ENCODE measurements at regions of chr12 and their contacts with region 1.

Region 1: GRCh38 chr12:121128970-121129810 is 3.5 kb upstream of the P2RX7 start:
- DNase-seq: peak; percentile 91
- H3K4me3 Mint-ChIP-seq: peak overlapping the region; percentile 54
- H3K27ac Mint-ChIP-seq: peak overlapping the region; percentile 98
- H3K4me1 Mint-ChIP-seq: peaks cover 73% of the 10 kb centered on the region
- H3K27me3 Mint-ChIP-seq: no peaks in the 10 kb centered on the region

Region 2: GRCh38 chr12:121033625-121034349 is 95.4 kb before region 1 on chr12:
- CTCF ChIA-PET with region 1: no interaction called
- POLR2A ChIA-PET with region 1: no interaction called
- intact Hi-C with region 1: loop called (anchors 1 kb)
- DNase-seq: peak; percentile 80
- H3K4me3 Mint-ChIP-seq: peak overlapping the region; percentile 10
- H3K27ac Mint-ChIP-seq: peak overlapping the region; percentile 72
- H3K4me1 Mint-ChIP-seq: peaks cover 58% of the 10 kb centered on the region
- H3K27me3 Mint-ChIP-seq: no peaks in the 10 kb centered on the region

Region 3: DNA sequence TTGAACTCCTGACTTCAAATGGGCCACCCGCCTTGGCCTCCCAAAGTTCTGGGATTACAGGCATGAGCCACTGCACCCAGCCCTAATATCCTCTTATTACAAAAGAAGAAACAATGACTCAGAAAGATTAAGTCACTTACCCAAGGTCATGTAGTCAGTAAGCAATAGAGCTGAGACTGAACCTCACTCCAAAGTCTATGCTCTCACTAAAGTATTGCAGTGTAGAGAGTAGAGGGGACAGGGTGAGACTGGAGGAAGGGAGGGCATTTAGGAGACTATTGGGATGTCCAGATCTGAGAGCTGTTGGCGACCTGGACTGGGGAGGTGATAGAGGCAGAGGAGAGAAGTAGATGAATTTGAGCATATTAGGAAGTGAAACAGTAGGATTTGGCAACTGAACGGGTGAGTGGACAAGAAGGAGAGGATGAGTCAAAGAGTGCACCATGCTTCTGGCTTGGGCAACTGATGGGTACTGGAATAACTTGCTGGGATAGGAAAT is 15.3 kb after region 1 on chr12:
- CTCF ChIA-PET with region 1: interaction called, 4 read pairs
- POLR2A ChIA-PET with region 1: interaction called, 10 read pairs
- intact Hi-C with region 1: loop called (anchors 1 kb)
- DNase-seq: peak; percentile 38
- H3K4me3 Mint-ChIP-seq: peak overlapping the region; percentile 14
- H3K27ac Mint-ChIP-seq: peak overlapping the region; percentile 89
- H3K4me1 Mint-ChIP-seq: peaks cover 31% of the 10 kb centered on the region
- H3K27me3 Mint-ChIP-seq: no peaks in the 10 kb centered on the region

Region 4: GRCh38 chr12:121209624-121210572 is 80.7 kb after region 1 on chr12 and contains the start of gene P2RX4:
- CTCF ChIA-PET with region 1: no interaction called
- POLR2A ChIA-PET with region 1: interaction called, 6 read pairs
- intact Hi-C with region 1: loop called (anchors 1 kb)
- DNase-seq: peak; percentile 93
- H3K4me3 Mint-ChIP-seq: peak within 1 kb of the TSS; percentile 82
- H3K27ac Mint-ChIP-seq: peak within 1 kb of the TSS; percentile 87
- H3K4me1 Mint-ChIP-seq: peaks cover 35% of the 10 kb centered on the region
- H3K27me3 Mint-ChIP-seq: no peaks in the 10 kb centered on the region
- total RNA-seq, gene P2RX4: 53.4 to 57.5 TPM

Region 5: DNA sequence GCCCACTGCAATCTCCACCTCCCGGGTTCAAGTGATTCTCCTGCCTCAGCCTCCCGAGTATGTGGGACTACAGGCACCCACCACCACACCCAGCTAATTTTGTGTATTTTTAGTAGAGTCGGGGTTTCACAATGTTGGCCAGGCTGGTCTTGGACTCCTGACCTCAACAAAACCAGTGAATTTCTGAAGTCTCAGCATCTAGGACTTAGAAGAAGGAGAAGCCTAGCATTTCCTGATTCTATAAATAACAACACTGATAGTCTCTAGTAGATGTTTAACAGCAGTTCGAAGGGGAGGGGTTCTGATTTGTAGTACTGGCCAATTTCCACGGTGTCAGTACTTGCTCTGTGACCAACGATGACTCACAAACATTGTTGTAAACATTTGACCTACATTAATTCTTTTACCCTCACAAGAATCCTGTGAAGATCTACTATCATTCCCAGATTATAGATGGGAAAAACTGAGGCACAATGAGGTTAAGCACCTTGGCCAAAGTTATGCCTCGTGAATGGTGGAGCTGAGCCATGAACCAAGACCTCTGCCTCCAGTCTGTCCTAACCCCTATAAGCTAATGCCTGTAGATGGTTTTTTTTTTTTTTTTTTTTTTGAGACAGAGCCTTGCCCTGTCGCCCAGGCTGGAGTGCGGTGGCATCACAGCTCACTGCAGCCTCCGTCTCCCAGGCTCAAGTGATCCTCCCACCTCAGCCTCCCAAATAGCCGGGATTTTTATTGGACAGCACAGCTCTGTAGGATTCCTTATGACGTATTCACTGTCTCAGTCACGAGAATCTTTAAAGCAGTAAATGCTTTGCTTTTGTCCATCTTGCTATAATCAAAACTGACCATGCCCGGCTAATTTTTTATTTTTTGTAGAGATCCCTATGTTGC is 85.9 kb after region 1 on chr12:
- CTCF ChIA-PET with region 1: interaction called, 4 read pairs
- POLR2A ChIA-PET with region 1: interaction called, 6 read pairs
- intact Hi-C with region 1: loop called (anchors 1 kb)
- DNase-seq: peak; percentile 32
- H3K4me3 Mint-ChIP-seq: peak overlapping the region; percentile 9
- H3K27ac Mint-ChIP-seq: peak overlapping the region; percentile 93
- H3K4me1 Mint-ChIP-seq: peaks cover 48% of the 10 kb centered on the region
- H3K27me3 Mint-ChIP-seq: no peaks in the 10 kb centered on the region

Region 6: DNA sequence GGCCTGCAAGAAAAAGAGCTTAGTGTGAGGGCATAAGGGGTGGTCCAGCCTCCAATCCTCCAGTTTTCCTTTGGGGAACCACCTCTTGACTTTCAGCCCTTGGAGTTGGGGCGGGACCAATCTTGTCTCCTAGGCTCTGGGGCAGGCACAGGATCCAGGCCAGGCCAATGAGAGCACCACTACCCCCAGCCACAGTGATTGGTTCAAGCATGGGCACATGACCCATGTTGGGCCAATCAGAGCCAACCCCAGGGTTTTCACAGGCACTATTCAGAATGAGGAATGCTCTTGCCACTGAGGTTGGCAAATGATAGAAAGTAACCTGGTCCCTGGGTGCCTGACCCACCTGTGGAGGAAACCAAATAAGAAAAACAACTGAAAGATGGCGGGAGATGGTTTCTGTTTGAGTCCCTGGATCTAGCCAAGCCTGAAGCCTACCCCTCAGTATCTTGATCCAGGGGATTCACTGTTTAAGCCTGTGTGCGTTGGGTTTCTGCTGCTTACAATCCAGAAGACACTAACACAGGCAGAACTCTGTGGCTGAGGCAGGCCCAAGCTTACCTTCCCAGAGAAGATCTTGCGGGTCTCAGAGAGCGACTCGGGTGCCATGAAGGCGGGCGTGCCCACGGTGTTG is 123.6 kb after region 1 on chr12:
- CTCF ChIA-PET with region 1: no interaction called
- POLR2A ChIA-PET with region 1: no interaction called
- intact Hi-C with region 1: no loop called
- DNase-seq: no peak
- H3K4me3 Mint-ChIP-seq: no peak overlapping the region
- H3K27ac Mint-ChIP-seq: no peak overlapping the region
- H3K4me1 Mint-ChIP-seq: peaks cover 3% of the 10 kb centered on the region
- H3K27me3 Mint-ChIP-seq: no peaks in the 10 kb centered on the region